ENCODE measurements at regions of chr2 and their contacts with region 1.

Region 1: GRCh38 chr2:218852911-218853667 is 6.5 kb upstream of the WNT6 start:
- DNase-seq: peak; percentile 43
- H3K4me3 ChIP-seq: no peak overlapping the region
- H3K27ac ChIP-seq: no peak overlapping the region
- H3K4me1 ChIP-seq: peaks cover 19% of the 10 kb centered on the region
- H3K27me3 ChIP-seq: no peaks in the 10 kb centered on the region
- CTCF ChIP-seq: peak; percentile 67 to 79

Region 2: DNA sequence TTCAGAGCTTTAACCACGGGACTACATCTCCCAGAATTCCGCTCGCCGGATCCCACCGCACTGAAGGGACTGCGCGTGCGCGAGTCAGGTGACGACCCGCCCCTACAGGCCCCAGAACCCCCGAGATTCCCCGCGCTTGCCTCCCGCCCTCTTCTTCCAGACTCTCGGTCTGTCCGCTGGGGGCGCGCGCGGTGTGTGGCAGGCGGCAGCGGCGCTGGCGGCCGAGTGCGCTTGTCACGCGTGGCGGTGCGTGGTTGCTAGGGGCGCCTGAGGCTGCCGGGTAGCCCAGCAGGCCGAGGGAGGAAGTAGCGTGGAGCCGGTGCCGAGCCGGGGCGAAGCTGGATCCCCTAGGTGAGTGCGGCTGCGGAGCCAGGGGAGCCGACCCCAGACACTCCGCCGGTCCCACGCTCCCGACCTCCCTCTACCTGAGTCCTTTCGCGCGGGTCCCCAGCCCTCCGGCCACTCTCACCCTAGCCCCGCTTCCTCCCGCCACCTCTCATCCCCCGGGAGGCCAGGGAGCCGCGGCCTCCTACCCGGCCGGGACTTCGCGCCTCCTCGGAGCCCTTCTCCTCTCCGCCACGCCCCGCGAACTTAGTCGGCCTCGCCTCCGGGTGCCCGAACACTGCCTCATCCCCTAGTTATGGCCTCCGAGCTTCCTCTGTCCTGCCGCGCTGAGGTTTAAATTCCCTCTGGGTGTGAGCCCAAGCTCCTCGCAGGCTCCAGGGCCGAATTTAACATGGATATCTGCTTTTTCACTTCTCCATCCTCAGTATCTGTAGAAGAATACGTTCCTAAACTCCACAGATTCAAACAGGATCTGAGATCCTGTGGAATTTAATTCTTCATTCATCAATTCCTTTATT is 142.2 kb before region 1 on chr2 and contains the start of gene TTLL4:
- CTCF ChIA-PET with region 1: no interaction called
- dilution Hi-C with region 1: no loop called
- in situ Hi-C with region 1: loop called in 1 of 2 experiments (anchors 10 kb)
- intact Hi-C with region 1: no loop called
- DNase-seq: peak; percentile 93
- H3K4me3 ChIP-seq: peak within 1 kb of the TSS; percentile 91 to 98 (median 97)
- H3K27ac ChIP-seq: peak within 1 kb of the TSS; percentile 89
- H3K4me1 ChIP-seq: peaks cover 6% of the 10 kb centered on the region
- H3K27me3 ChIP-seq: no peaks in the 10 kb centered on the region
- CTCF ChIP-seq: peak; percentile 55 to 86
- total RNA-seq, gene TTLL4: 31.3 to 47.3 TPM

Region 3: GRCh38 chr2:218876562-218877219 is 23.6 kb after region 1 on chr2:
- CTCF ChIA-PET with region 1: no interaction called
- dilution Hi-C with region 1: no loop called
- in situ Hi-C with region 1: no loop called
- intact Hi-C with region 1: loop called (anchors 2 kb)
- DNase-seq: peak; percentile 51
- H3K4me3 ChIP-seq: no peak overlapping the region
- H3K27ac ChIP-seq: no peak overlapping the region
- H3K4me1 ChIP-seq: peaks cover 13% of the 10 kb centered on the region
- H3K27me3 ChIP-seq: no peaks in the 10 kb centered on the region
- CTCF ChIP-seq: peak; percentile 98 to 99

Region 4: DNA sequence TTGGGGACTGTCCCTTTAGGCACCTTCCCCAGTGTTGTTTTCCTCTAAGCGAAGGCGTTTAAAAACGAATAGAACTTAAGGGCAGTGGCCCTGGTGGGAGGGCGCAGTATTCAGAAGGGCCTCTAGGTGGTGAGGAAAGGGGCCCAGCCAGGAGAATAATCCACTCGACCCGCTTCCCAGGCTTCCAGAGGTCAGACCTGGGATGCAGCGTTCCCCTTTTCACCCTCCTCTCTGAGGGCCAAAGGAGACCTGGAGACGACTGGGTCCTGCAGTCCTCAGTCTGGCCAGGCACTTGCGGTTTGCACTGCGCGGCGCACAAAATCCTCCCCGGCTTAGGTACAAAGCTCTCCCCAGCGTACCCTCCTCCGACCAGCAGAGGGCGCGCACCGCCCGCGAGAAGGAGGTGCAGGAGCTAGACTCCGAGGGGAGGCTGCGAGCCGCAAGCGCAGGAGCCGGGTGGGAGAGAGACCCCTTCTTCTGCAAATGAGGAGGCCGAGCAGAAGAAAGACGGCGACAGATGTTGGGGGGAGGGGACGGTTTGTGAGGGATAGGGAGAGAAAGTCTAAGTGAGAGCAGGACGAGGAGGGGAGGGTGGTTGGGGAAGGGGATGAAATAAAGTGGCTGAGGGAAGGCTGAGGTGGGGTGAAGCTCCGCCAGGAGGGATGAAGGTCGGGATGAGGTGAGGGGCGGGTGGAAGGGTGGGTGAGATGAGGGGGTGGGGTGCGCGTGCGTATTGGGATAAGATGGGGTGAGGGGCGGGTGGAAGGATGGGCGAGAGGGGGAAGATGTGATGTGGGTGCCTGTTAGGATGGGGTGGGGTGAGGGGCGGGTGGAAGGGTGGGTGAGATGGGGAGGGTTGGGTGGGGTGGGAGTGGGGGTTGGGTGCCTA is 127.0 kb after region 1 on chr2:
- CTCF ChIA-PET with region 1: interaction called, 7 read pairs
- dilution Hi-C with region 1: no loop called
- in situ Hi-C with region 1: no loop called
- intact Hi-C with region 1: loop called (anchors 2 kb)
- DNase-seq: peak; percentile 67
- H3K4me3 ChIP-seq: peak overlapping the region in 1 of 3 experiments; percentile 37
- H3K27ac ChIP-seq: no peak overlapping the region
- H3K4me1 ChIP-seq: peaks cover 15% of the 10 kb centered on the region
- H3K27me3 ChIP-seq: peaks cover 41% of the 10 kb centered on the region
- CTCF ChIP-seq: peak; percentile 79 to 86

Region 5: GRCh38 chr2:219017201-219017931 is 164.3 kb after region 1 on chr2:
- CTCF ChIA-PET with region 1: no interaction called
- dilution Hi-C with region 1: no loop called
- in situ Hi-C with region 1: no loop called
- intact Hi-C with region 1: no loop called
- DNase-seq: no peak
- H3K4me3 ChIP-seq: no peak overlapping the region
- H3K27ac ChIP-seq: no peak overlapping the region
- H3K4me1 ChIP-seq: no peaks in the 10 kb centered on the region
- H3K27me3 ChIP-seq: no peaks in the 10 kb centered on the region
- CTCF ChIP-seq: no peak

Region 6: GRCh38 chr2:219029829-219030165 is 176.7 kb after region 1 on chr2:
- CTCF ChIA-PET with region 1: no interaction called
- dilution Hi-C with region 1: no loop called
- in situ Hi-C with region 1: no loop called
- intact Hi-C with region 1: loop called (anchors 1 kb)
- DNase-seq: peak; percentile 43
- H3K4me3 ChIP-seq: no peak overlapping the region
- H3K27ac ChIP-seq: no peak overlapping the region
- H3K4me1 ChIP-seq: no peaks in the 10 kb centered on the region
- H3K27me3 ChIP-seq: peaks cover 3% of the 10 kb centered on the region
- CTCF ChIP-seq: peak; percentile 90 to 97

Measured in mammary epithelial cell (primary cell).